Activated T-helper 1 cell treated with anti-CD3 and anti-CD28 coated beads, Interleukin-12 subunit alpha, Interleukin-12 subunit beta, Interleukin-2, Interleukin-4 antibody, amounts not matched to agents 30 ng/mL and 10 ng/mL and 1 ng/mL, durations not matched to agents 14 hours and 24 hours and 36 hours (primary cell): ENCODE measurements at regions of chr18 and their contacts with region 1.

Region 1: GRCh38 chr18:57434536-57435494 is at the start of gene ONECUT2:
- DNase-seq: peak; percentile 23
- H3K4me3 Mint-ChIP-seq: no peak within 1 kb of the TSS
- H3K27ac Mint-ChIP-seq: peak within 1 kb of the TSS; percentile 63
- H3K4me1 Mint-ChIP-seq: peaks cover 9% of the 10 kb centered on the region
- H3K27me3 Mint-ChIP-seq: peaks cover 82% of the 10 kb centered on the region
- total RNA-seq, gene ONECUT2: under 0.01 TPM in 1 of 2 replicates, not detected in the other

Region 2: DNA sequence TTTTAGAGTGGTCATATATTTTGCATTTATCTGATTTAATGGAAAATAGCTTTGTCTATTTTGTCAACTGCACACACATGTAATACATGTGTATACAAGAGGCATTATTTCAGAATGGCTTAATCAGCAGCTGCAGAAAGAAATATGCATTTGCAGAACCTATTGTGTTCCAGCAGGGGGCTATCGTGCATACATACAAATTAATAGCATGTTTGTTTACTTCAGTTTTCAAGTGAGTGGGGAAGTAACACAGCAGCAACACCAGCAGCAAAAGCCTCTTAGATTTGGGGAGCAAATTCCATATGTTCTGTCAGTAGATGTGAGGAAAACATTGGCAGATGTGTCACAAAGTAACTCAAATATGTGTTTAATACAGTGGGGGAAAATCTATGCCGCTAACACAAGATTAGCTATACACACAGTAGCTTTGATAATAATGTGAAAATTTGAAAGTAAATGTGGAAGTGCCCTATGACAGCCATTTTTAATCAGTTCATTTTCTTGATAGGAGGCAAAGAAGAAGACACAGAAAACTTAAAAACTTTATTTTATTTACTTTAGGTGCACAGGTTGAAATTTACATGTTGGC is 565.5 kb before region 1 on chr18:
- intact Hi-C with region 1: loop called (anchors 5 kb)
- DNase-seq: no peak
- H3K4me3 Mint-ChIP-seq: no peak overlapping the region
- H3K27ac Mint-ChIP-seq: no peak overlapping the region
- H3K4me1 Mint-ChIP-seq: no peaks in the 10 kb centered on the region
- H3K27me3 Mint-ChIP-seq: no peaks in the 10 kb centered on the region

Region 3: DNA sequence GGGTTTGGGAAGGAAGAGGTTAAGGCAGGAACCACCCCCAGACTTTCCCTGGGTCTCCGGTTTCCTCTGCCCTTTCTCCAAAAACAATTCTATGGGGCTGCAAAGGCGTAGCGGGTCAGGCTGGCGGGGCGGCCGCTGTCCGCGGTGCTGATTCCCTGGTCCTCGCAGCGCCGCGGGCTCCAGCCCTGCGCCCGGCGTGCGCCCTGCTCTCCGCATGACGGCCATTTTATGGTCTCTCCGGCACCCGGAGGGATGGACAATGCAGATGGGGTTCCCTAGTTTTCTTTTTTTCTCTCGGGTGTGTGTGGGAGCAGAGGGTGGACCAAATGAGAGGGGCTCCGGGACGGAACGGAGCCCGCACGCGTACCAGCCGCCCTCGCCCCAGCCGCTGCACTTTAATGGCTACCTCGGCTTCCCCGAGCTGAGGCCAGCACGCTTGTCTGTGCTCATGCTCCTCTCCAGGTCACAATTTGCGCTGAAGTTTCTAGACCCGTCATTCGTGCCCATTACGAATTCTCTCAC is 80.8 kb before region 1 on chr18:
- intact Hi-C with region 1: loop called (anchors 5 kb)
- DNase-seq: no peak
- H3K4me3 Mint-ChIP-seq: no peak overlapping the region
- H3K27ac Mint-ChIP-seq: no peak overlapping the region
- H3K4me1 Mint-ChIP-seq: no peaks in the 10 kb centered on the region
- H3K27me3 Mint-ChIP-seq: peaks cover 38% of the 10 kb centered on the region